Mammary epithelial cell (primary cell): ENCODE measurements at regions of chr1 and their contacts with region 1.

Region 1: DNA sequence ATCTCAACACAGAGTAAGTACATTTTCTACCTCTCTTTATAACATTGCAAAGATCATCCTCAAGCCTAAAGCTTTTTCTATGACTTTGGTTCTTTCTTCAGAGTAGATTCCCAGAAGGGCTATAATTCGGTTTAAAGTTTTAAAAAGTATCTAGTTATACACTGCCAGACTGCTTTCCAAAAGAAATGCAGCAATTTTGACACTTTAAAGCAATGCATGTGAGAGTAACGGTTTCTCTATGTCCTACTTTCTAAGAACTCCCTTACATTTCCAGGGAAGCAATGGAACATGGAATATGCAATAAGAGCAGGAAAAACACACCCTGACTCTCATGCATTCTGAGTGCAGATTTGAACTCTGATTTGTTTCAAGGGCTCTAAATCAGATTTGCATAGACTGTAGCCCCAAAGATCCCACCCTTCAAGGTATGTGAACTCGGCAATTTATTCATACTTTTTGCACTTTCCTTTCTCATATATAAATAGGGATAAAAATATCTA is 331.6 kb downstream of the HHIPL2 start:
- DNase-seq: no peak
- H3K4me3 ChIP-seq: no peak overlapping the region
- H3K27ac ChIP-seq: no peak overlapping the region
- H3K4me1 ChIP-seq: peaks cover 4% of the 10 kb centered on the region
- H3K27me3 ChIP-seq: no peaks in the 10 kb centered on the region
- CTCF ChIP-seq: no peak

Region 2: DNA sequence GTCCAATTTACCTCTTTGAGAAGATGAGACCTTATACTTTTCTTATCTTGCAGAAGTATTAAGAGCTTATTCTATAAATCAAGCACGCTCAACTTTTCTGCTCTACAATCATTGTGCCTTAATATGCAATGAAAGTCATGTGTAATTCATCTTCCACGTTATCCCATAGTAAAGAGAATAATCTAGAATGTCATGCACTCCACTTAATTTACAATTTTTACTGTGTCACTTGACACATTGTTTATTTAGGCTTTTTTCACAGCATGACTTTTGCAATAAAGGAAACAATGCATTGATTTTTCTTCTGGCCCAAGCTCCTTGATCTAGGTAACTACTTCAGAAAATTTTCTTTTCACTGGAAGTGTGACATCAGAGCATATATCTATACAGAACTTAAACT is 40.7 kb after region 1 on chr1:
- CTCF ChIA-PET with region 1: no interaction called
- dilution Hi-C with region 1: loop called (anchors 5 kb)
- in situ Hi-C with region 1: no loop called
- intact Hi-C with region 1: no loop called
- DNase-seq: no peak
- H3K4me3 ChIP-seq: no peak overlapping the region
- H3K27ac ChIP-seq: no peak overlapping the region
- H3K4me1 ChIP-seq: no peaks in the 10 kb centered on the region
- H3K27me3 ChIP-seq: no peaks in the 10 kb centered on the region
- CTCF ChIP-seq: no peak